Right lobe of liver (tissue), 6 donors: ENCODE measurements at regions of chr19 and their contacts with region 1.

Region 1: GRCh38 chr19:1672038-1672768 is 19.8 kb upstream of the TCF3 start:
- DNase-seq: peak in 2 of 3 donors; percentile 50 to 52
- ATAC-seq: peak; percentile 65 to 80 (median 73)
- H3K4me3 ChIP-seq: no peak overlapping the region
- H3K27ac ChIP-seq: no peak overlapping the region
- H3K4me1 ChIP-seq: peaks cover 0 to 17% (median 2%) of the 10 kb centered on the region in 4 donors
- H3K27me3 ChIP-seq: peaks cover 0 to 9% of the 10 kb centered on the region in 2 donors
- CTCF ChIP-seq: peak; percentile 70 to 73 (median 72)
- POLR2A ChIP-seq: no peak

Region 2: GRCh38 chr19:1549332-1549945 is 122.8 kb before region 1 on chr19:
- intact Hi-C with region 1: loop called (anchors 5 to 10 kb)
- DNase-seq: no peak
- ATAC-seq: no peak
- H3K4me3 ChIP-seq: no peak overlapping the region
- H3K27ac ChIP-seq: no peak overlapping the region
- H3K4me1 ChIP-seq: peaks cover 0 to 3% (median 1%) of the 10 kb centered on the region in 4 donors
- H3K27me3 ChIP-seq: no peaks in the 10 kb centered on the region
- CTCF ChIP-seq: no peak
- POLR2A ChIP-seq: no peak

Region 3: GRCh38 chr19:1555487-1556389 is 116.5 kb before region 1 on chr19:
- intact Hi-C with region 1: loop called in 1 of 2 experiments (anchors 10 kb)
- DNase-seq: no peak
- ATAC-seq: no peak
- H3K4me3 ChIP-seq: no peak overlapping the region
- H3K27ac ChIP-seq: no peak overlapping the region
- H3K4me1 ChIP-seq: no peaks in the 10 kb centered on the region
- H3K27me3 ChIP-seq: no peaks in the 10 kb centered on the region
- CTCF ChIP-seq: no peak
- POLR2A ChIP-seq: no peak

Region 4: GRCh38 chr19:1789261-1790041 is 117.2 kb after region 1 on chr19:
- intact Hi-C with region 1: no loop called
- DNase-seq: peak in 1 of 3 donors; percentile 58
- ATAC-seq: peak; percentile 44 to 61 (median 56)
- H3K4me3 ChIP-seq: peak overlapping the region in 2 of 3 donors; percentile 3 to 9
- H3K27ac ChIP-seq: no peak overlapping the region
- H3K4me1 ChIP-seq: no peaks in the 10 kb centered on the region
- H3K27me3 ChIP-seq: peaks cover 0 to 6% of the 10 kb centered on the region in 2 donors
- CTCF ChIP-seq: no peak
- POLR2A ChIP-seq: no peak